Pancreas (tissue), 10 donors: ENCODE measurements at regions of chr3 and their contacts with region 1.

Region 1: DNA sequence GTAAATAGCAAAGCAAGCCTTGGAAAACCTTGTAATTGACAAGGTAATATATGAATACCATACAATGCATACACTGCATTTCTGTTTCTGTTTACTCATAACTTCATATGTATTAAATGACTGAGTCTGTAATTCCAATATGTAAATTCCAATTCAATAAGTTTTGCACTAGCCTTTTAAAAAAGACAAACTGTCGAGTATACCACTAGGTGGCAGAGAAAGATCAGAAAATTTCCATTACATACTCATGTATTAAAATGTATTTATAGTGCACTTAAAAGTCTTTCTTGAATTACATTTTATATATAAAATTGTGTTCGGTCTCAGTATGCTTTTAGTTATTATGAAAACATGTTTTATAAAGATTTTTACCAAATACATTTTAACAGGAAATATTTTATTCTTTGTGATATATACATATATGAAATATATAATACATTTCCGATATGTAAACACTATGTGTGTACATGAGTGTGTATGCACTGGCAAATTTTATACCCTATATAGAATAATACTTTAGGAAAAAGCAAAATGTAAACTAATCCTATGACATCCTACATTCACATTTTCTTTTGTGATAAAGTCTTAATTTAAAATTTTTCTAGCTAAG is 216.8 kb downstream of the VGLL3 start:
- DNase-seq: no peak
- ATAC-seq: peak in 3 of 4 donors; percentile 64 to 68 (median 66)
- H3K4me3 ChIP-seq: no peak overlapping the region
- H3K27ac ChIP-seq: no peak overlapping the region
- H3K4me1 ChIP-seq: no peaks in the 10 kb centered on the region
- H3K27me3 ChIP-seq: peaks cover 0 to 4% (median 0%) of the 10 kb centered on the region in 4 donors
- CTCF ChIP-seq: peak in 3 of 4 donors; percentile 30 to 38 (median 36)

Region 2: GRCh38 chr3:86837871-86838270 is 63.7 kb after region 1 on chr3:
- intact Hi-C with region 1: no loop called
- DNase-seq: no peak
- ATAC-seq: no peak
- H3K4me3 ChIP-seq: no peak overlapping the region
- H3K27ac ChIP-seq: no peak overlapping the region
- H3K4me1 ChIP-seq: no peaks in the 10 kb centered on the region
- H3K27me3 ChIP-seq: no peaks in the 10 kb centered on the region
- CTCF ChIP-seq: no peak

Region 3: DNA sequence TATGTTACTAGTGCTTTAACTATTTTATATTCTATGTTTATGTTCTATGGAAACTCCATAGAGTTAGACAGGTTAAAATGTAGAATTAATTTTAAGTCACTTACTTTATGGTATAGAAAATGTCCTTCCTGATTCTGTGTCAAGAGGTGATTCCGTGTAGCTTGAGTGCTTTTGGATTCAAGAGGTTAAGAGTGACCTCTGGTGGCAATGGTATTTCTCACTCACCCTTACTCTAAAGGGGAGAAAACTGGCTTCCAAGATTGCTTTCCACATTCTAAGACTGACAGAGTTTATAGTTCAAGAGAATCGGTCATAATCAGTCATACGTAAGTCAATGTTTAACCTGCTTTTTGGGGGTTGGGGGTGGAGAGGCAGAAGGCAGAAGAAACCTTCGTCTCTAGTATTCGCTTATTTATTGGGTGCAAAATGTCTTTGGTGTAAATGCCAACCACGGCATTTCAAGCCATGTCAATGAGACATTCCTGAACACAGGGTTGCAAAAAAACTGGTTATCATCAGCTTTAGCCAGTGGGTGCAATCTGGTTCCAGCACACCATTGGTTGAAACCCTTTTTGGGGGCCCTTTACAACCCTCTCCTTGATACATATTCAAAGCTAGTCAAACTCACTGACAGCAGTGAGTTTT is 308.7 kb after region 1 on chr3:
- intact Hi-C with region 1: loop called (anchors 5 to 10 kb)
- DNase-seq: peak in 2 of 6 donors; percentile 9 to 19
- ATAC-seq: peak; percentile 82 to 95 (median 92)
- H3K4me3 ChIP-seq: no peak overlapping the region
- H3K27ac ChIP-seq: no peak overlapping the region
- H3K4me1 ChIP-seq: no peaks in the 10 kb centered on the region
- H3K27me3 ChIP-seq: no peaks in the 10 kb centered on the region
- CTCF ChIP-seq: peak in 3 of 4 donors; percentile 27 to 44 (median 37)

Region 4: GRCh38 chr3:87167628-87168456 is 393.7 kb after region 1 on chr3:
- intact Hi-C with region 1: loop called in 1 of 3 experiments (anchors 10 kb)
- DNase-seq: peak in 2 of 6 donors; percentile 7 to 42
- ATAC-seq: peak in 3 of 4 donors; percentile 83 to 85 (median 85)
- H3K4me3 ChIP-seq: peak overlapping the region in 3 of 4 donors; percentile 6 to 38 (median 22)
- H3K27ac ChIP-seq: no peak overlapping the region
- H3K4me1 ChIP-seq: peaks cover 0 to 5% (median 3%) of the 10 kb centered on the region in 3 donors
- H3K27me3 ChIP-seq: no peaks in the 10 kb centered on the region
- CTCF ChIP-seq: peak; percentile 55 to 74 (median 60)